Common myeloid progenitor, CD34-positive (primary cell): ENCODE measurements at regions of chr12 and their contacts with region 1.

Region 1: DNA sequence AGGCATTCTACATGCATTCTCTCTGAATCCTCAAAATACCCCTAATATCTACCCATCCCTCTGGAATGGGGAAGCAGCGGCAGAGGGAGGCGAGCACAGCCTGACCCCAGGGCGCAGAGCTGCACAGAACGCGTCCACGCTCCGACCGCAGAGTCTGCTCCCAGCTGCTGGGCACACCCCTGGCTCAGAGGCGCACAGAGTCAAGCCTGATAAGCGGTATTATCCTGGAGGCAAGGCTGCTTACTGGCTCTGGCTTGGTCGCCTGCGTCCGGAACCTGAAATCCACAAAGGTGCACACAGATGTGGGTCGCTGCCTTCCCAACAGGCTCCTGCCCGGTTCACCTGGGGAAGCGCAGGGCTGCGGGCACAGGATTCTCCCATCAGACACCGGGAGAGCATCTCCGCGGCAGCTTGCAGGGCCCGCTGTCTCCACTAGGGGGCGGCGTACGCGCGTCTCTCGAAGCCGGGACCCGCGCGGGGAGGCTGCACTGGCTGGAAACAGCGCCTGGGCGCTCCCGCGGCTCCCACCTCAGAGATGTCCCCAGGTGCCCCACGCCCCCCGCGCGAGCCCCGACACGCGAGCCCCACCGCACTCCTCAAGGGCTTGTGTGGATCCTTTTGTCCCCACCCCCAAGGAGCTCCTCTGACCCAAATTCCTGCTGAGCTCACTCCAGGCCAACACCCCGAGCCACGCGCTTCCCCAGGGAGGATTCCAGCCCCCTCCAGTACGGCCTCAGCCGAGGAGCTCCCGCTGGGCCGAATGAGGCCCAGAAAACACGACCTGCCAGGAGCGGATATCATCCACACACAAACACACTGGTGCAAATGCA is 120.1 kb upstream of the FZD10 start:
- DNase-seq: peak in 2 of 3 donors; percentile 40 to 56
- H3K4me3 ChIP-seq: no peak overlapping the region
- H3K27ac ChIP-seq: no peak overlapping the region
- H3K4me1 ChIP-seq: no peaks in the 10 kb centered on the region
- H3K27me3 ChIP-seq: peaks cover 0 to 52% (median 13%) of the 10 kb centered on the region in 5 experiments

Region 2: GRCh38 chr12:130031571-130032189 is 10.5 kb before region 1 on chr12:
- CTCF ChIA-PET with region 1: interaction called, 21 read pairs
- POLR2A ChIA-PET with region 1: no interaction called
- DNase-seq: peak; percentile 55 to 73 (median 64)
- H3K4me3 ChIP-seq: no peak overlapping the region
- H3K27ac ChIP-seq: no peak overlapping the region
- H3K4me1 ChIP-seq: no peaks in the 10 kb centered on the region
- H3K27me3 ChIP-seq: peaks cover 0 to 11% (median 4%) of the 10 kb centered on the region in 5 experiments

Region 3: DNA sequence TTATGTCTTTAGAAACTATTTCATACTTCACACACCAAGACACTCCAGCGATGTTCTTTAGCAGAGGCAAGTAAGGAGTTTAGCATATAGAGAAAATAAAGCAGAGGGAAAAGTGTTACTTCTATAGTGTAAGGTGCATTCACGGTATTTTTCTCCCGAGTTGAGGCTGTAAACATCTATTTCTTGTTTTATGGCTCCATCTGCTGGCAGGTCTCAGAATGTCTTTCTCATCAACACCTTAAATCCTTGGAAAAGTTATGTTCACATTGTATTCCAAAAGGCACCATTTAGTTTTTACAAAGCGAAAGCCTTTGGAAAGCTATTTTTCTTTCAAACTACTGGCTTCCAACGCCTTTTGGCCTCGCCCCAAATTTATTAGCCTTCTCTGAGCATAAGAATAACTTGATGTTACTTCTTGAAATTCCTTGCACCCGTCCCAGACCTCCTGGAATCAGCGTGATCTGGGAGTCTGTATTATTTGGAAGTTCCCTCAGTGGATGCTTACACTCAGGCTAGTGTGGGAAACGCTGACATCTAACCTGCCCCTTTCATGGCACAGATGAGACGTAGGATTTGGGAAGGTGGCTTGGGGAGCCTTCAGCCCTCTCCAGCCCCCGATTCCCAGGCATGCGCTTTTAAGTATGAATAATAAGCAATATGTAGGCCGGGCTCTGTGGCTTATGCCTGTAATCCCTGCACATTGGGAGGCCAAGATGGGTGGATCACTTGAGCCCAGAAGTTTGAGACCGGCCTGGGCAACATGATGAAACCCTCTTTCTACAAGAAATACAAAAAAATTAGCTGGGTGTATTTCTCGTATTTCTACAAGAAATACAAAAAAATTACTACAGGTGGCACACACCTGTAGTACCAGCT is 293.6 kb after region 1 on chr12:
- CTCF ChIA-PET with region 1: interaction called, 27 read pairs
- POLR2A ChIA-PET with region 1: no interaction called
- DNase-seq: peak; percentile 56 to 84 (median 74)
- H3K4me3 ChIP-seq: no peak overlapping the region
- H3K27ac ChIP-seq: no peak overlapping the region
- H3K4me1 ChIP-seq: peaks cover 0 to 6% (median 0%) of the 10 kb centered on the region in 4 experiments
- H3K27me3 ChIP-seq: peaks cover 0 to 53% (median 24%) of the 10 kb centered on the region in 5 experiments